Head of caudate nucleus (tissue), 42 donors: ENCODE measurements at regions of chr1 and their contacts with region 1.

Region 1: DNA sequence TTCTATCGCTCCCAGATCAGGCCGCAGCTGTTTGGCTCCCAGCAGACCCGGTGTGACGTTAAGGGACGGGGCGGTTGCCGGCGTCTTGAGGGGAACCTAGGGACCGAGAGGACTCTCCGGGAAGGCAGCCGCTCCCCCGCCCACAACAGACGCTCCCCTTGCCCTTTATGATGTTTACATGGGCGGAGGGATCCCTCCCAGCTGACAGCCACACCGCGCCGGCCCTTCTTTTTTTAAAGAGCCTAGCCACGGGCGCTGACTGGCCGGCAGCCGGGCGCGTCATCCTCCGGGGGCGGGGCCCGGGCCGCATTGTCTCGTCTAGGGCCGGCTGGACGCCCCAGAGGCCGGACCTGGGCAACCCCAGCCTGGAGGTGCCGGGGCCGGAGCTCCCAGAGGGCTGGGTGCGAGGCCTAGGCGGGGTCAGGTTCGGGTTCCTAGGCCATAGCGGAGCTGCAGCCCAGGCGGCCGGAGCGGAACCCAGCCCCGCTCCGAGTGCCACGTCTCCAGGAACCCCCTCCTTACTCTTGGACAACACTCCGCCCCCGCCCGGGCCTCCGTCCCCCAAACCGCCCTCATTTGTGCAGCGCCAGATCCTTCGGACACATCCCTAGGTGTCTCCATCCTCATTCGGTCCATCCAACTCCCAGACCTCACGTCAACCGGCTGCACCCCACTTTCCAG is at the start of gene PCAT6:
- DNase-seq: peak; percentile 88 to 97 (median 93)

Region 2: GRCh38 chr1:202861420-202862200 is 50.9 kb after region 1 on chr1:
- intact Hi-C with region 1: loop called (anchors 10 kb)
- DNase-seq: peak; percentile 85 to 96 (median 92)

Region 3: GRCh38 chr1:203216274-203217138 is 405.8 kb after region 1 on chr1:
- intact Hi-C with region 1: no loop called
- DNase-seq: peak in 41 of 42 donors; percentile 18 to 89 (median 70)